ENCODE measurements at regions of chr1 and their contacts with region 1.

Region 1: GRCh38 chr1:248825909-248826760 is at the start of gene SH3BP5L:
- DNase-seq: peak; percentile 78
- ATAC-seq: peak; percentile 84
- H3K4me3 Mint-ChIP-seq: peak within 1 kb of the TSS; percentile 93
- H3K27ac Mint-ChIP-seq: peak within 1 kb of the TSS; percentile 97
- H3K4me1 Mint-ChIP-seq: peaks cover 56% of the 10 kb centered on the region
- H3K27me3 Mint-ChIP-seq: no peaks in the 10 kb centered on the region
- CTCF ChIP-seq: no peak
- total RNA-seq, gene SH3BP5L: 26.3 and 27.3 TPM in 2 replicates

Region 2: DNA sequence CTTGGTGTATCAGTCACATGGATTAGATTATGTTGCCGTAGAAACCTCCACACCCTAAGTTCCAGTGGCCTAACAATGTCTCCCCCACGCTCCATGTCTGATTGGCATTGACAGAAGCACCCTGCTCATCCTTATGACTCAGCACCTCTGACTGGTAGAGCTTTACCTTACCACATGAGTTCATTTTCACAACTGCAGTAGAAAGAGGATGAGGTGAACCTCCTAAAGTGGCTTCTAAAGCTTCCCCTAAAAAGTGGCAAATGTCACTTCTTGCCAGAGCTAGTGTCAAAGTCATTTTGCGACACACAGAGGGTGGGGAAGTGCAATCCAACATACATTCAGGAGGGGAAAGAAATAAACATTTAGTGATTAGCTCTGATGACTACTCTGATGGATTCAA is 40.0 kb before region 1 on chr1:
- CTCF ChIA-PET with region 1: no interaction called
- POLR2A ChIA-PET with region 1: no interaction called
- intact Hi-C with region 1: no loop called
- DNase-seq: no peak
- ATAC-seq: peak; percentile 64
- H3K4me3 Mint-ChIP-seq: no peak overlapping the region
- H3K27ac Mint-ChIP-seq: no peak overlapping the region
- H3K4me1 Mint-ChIP-seq: peaks cover 46% of the 10 kb centered on the region
- H3K27me3 Mint-ChIP-seq: no peaks in the 10 kb centered on the region
- CTCF ChIP-seq: no peak

Region 3: GRCh38 chr1:248813546-248813945 is 12.6 kb before region 1 on chr1:
- CTCF ChIA-PET with region 1: no interaction called
- POLR2A ChIA-PET with region 1: no interaction called
- intact Hi-C with region 1: no loop called
- DNase-seq: no peak
- ATAC-seq: no peak
- H3K4me3 Mint-ChIP-seq: no peak overlapping the region
- H3K27ac Mint-ChIP-seq: no peak overlapping the region
- H3K4me1 Mint-ChIP-seq: peaks cover 34% of the 10 kb centered on the region
- H3K27me3 Mint-ChIP-seq: no peaks in the 10 kb centered on the region
- CTCF ChIP-seq: no peak

Region 4: GRCh38 chr1:248858891-248859889 is 33.1 kb after region 1 on chr1 and contains the start of gene ZNF692:
- CTCF ChIA-PET with region 1: interaction called, 19 read pairs
- POLR2A ChIA-PET with region 1: interaction called, 46 read pairs
- intact Hi-C with region 1: loop called (anchors 1 kb)
- DNase-seq: peak; percentile 97
- ATAC-seq: peak; percentile 88
- H3K4me3 Mint-ChIP-seq: peak within 1 kb of the TSS; percentile 87
- H3K27ac Mint-ChIP-seq: peak within 1 kb of the TSS; percentile 97
- H3K4me1 Mint-ChIP-seq: peaks cover 55% of the 10 kb centered on the region
- H3K27me3 Mint-ChIP-seq: no peaks in the 10 kb centered on the region
- CTCF ChIP-seq: no peak
- total RNA-seq, gene ZNF692: 36.4 and 40.3 TPM in 2 replicates

Region 5: DNA sequence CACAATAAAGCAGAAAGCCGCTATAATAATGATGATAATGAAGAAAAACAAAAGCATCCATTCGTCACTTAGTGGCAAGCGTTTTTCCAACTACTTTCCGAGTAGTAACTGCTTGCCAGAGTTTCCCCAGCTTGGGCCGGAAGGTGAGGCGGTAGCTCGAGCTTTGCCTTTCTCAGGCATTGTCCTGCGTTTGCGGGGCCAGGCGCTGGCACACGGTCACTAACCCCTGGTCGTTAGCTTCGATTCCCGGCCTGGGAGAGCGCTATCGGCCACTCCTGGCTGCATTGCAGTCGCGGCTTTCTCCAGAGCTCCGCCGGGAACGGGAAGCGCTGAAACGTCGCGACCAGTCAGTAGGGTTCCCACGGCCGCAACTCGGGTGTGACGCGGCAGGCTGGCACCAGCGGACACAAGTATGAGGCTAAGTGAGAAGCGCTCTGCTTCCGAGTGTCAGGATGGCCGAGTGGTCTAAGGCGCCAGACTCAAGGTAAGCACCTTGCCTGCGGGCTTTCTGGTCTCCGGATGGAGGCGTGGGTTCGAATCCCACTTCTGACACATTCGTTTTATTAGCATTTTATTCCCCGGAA is 47.4 kb after region 1 on chr1:
- CTCF ChIA-PET with region 1: no interaction called
- POLR2A ChIA-PET with region 1: interaction called, 11 read pairs
- intact Hi-C with region 1: loop called (anchors 1 kb)
- DNase-seq: peak; percentile 91
- ATAC-seq: peak; percentile 80
- H3K4me3 Mint-ChIP-seq: peak overlapping the region; percentile 95
- H3K27ac Mint-ChIP-seq: peak overlapping the region; percentile 97
- H3K4me1 Mint-ChIP-seq: peaks cover 19% of the 10 kb centered on the region
- H3K27me3 Mint-ChIP-seq: peaks cover 8% of the 10 kb centered on the region
- CTCF ChIP-seq: no peak

Region 6: GRCh38 chr1:248894837-248895236 is 68.7 kb after region 1 on chr1:
- CTCF ChIA-PET with region 1: no interaction called
- POLR2A ChIA-PET with region 1: no interaction called
- intact Hi-C with region 1: no loop called
- DNase-seq: no peak
- ATAC-seq: no peak
- H3K4me3 Mint-ChIP-seq: no peak overlapping the region
- H3K27ac Mint-ChIP-seq: no peak overlapping the region
- H3K4me1 Mint-ChIP-seq: no peaks in the 10 kb centered on the region
- H3K27me3 Mint-ChIP-seq: peaks cover 23% of the 10 kb centered on the region
- CTCF ChIP-seq: no peak

Region 7: GRCh38 chr1:248906009-248906752 is 80.0 kb after region 1 on chr1 and contains the start of gene PGBD2:
- CTCF ChIA-PET with region 1: interaction called, 3 read pairs
- POLR2A ChIA-PET with region 1: interaction called, 13 read pairs
- intact Hi-C with region 1: loop called (anchors 1 kb)
- DNase-seq: peak; percentile 95
- ATAC-seq: peak; percentile 83
- H3K4me3 Mint-ChIP-seq: peak within 1 kb of the TSS; percentile 99
- H3K27ac Mint-ChIP-seq: peak within 1 kb of the TSS; percentile 99
- H3K4me1 Mint-ChIP-seq: peaks cover 46% of the 10 kb centered on the region
- H3K27me3 Mint-ChIP-seq: no peaks in the 10 kb centered on the region
- CTCF ChIP-seq: no peak
- total RNA-seq, gene PGBD2: 12.3 and 13.4 TPM in 2 replicates

Region 8: DNA sequence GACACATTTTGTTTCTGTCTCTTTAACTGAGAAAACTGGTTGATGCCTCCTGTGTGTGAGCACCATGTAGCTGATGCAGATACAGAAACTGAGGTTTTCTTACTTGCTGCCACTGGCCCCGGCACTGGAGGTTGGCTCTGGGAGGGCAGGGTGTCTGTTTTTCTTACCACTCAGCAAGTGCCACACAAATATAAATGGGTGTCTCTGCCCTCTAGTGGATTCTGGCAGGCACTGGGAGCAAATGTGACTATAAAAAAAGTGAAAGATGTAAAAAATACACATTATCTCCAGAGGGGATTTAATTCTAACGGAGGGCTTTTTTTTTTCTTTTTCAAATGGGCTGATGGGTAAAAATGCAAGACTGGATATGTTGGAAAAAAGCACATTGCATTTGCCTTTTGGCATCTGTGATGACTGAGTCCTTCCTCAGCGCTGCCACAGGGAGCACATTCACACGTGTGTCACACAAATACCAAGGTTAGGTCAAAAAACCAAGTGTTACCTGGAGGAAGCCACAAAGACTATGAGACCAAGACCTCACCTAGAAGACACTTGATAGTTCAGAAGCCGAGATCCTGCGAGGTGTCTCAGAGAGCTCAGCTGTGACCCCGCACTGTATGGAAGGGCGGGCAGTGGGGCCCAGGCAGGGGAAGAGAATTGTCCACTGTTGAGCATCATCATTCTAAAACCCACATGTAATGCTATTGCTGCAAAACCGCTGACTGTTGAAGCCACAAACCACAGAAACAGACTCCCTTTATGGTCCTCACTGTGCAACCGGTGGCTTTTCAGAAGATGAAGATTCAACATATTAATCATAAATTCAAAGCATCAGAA is 98.8 kb after region 1 on chr1:
- CTCF ChIA-PET with region 1: interaction called, 3 read pairs
- POLR2A ChIA-PET with region 1: no interaction called
- intact Hi-C with region 1: loop called (anchors 1 kb)
- DNase-seq: no peak
- ATAC-seq: peak; percentile 78
- H3K4me3 Mint-ChIP-seq: no peak overlapping the region
- H3K27ac Mint-ChIP-seq: no peak overlapping the region
- H3K4me1 Mint-ChIP-seq: peaks cover 10% of the 10 kb centered on the region
- H3K27me3 Mint-ChIP-seq: no peaks in the 10 kb centered on the region
- CTCF ChIP-seq: no peak

Measured in activated B cell treated with CpG ODN at 0.5 μM for 24 hours (primary cell).